ENCODE measurements at regions of chr2 and their contacts with region 1.

Region 1: GRCh38 chr2:20642055-20642971 is 8.6 kb downstream of the HS1BP3 start:
- DNase-seq: peak; percentile 77
- H3K27ac ChIP-seq: peak overlapping the region; percentile 77
- CTCF ChIP-seq: peak; percentile 93

Region 2: DNA sequence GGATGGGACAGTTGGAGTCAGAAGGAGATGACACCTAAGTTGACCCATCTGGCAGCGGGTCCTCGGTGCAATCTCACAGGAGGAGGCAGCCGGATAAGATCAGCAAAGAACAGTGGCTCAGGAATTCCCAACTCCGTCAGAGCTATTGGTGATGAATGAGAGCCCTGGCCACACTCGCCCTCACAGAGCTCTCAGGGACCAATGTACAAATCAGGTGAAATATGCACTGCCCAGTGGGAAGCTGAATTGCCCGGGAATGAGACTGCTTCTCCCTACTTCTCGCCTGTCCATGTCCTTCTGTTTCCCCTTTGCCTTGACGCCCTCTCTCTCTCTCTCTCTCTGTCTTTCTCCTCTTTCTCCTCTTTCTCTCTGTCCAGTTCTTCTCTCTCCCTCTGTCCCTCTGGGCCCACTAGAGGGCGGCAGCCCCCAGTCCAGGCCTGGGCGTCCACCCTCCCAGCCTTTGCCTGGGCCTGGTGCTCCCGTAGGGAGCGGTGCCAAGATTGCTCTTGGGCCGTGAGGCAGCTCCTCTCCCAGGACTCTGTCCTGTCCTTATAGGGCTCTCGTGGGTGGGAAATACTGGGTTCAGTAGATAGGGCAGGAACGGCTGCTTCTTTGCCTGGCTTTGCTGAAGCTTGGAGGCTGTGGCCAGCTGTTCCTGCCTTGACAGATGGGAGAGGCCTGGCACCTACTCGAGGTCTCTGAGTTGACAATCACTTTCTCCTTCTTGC is 263.4 kb before region 1 on chr2:
- CTCF ChIA-PET with region 1: interaction called, 13 read pairs
- POLR2A ChIA-PET with region 1: no interaction called
- DNase-seq: peak; percentile 60
- H3K27ac ChIP-seq: peak overlapping the region; percentile 58
- CTCF ChIP-seq: peak; percentile 80

Region 3: DNA sequence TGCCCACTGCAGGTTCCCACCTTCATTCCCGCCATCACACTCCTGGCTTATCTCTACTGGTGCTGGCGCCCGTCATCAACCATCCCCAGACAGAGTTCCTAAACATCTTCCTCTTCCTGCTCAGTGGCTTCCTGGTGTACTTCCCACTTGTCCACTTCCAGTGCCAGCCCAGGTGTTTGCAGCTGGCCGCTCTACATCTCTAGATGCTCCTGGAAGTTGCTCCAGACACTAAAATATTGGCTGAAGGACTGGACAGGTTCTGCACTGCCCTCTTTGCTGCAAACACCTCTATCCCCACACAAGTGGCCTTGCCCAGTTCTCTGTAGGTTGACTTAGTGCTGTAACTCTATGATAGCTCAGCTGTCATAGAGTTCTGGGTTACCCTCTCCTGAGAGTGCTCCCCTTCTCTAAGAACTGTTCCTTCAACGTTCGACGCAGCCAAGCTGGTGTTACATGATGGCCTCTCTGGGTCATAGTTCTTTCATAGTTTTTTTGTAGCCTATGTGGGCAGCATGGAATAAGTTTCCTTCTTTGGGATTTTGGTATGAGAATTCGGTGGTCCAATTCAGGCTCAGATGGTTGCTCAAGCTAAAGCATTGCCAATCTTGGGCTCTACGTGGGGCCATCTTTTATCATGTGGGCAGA is 245.8 kb before region 1 on chr2:
- CTCF ChIA-PET with region 1: interaction called, 17 read pairs
- POLR2A ChIA-PET with region 1: no interaction called
- DNase-seq: no peak
- H3K27ac ChIP-seq: no peak overlapping the region
- CTCF ChIP-seq: no peak

Region 4: GRCh38 chr2:20411361-20411894 is 230.9 kb before region 1 on chr2:
- CTCF ChIA-PET with region 1: interaction called, 14 read pairs
- POLR2A ChIA-PET with region 1: no interaction called
- DNase-seq: peak; percentile 68
- H3K27ac ChIP-seq: no peak overlapping the region
- CTCF ChIP-seq: peak; percentile 79

Region 5: DNA sequence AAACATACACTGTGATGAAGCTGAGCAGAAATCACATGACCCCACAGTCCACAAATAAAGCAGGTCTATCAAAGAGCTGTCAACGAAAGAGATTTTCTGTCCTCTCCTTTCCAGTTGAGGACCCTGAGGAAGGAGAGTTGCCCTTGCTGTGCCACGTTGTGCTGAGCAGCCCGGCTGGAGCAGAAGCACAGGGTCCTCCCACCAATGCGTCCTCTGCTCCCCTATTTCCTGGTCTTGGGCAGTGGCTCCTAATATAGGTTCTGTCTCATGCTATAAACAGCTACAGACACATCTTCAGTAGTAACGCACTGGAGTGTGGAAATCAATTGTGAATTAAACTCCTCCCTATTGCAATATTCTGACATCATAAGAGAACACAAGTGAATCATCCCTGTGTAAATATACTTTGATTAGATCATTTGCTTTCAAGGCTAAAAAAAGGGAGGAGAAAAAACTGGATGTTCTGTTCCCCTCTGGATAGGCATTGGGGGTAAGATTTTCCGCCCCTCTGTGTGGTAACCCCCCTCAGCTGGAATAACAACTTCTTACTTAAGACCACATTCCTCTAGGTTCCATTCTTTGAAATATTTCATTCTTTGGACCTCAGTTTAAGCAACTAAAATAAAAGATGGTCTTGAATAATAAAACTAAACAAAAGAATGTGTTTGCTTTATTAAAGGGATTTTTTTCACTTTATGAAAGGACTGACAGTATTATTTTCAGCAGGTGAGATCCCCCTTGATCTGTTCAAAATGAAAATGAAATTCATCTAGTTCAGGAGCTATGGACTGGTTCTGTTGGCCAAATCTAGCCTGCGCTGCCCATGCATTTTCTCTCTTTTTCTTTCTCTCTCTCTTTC is 203.8 kb before region 1 on chr2:
- CTCF ChIA-PET with region 1: interaction called, 22 read pairs
- POLR2A ChIA-PET with region 1: no interaction called
- DNase-seq: peak; percentile 83
- H3K27ac ChIP-seq: peak overlapping the region; percentile 76
- CTCF ChIP-seq: no peak

Region 6: GRCh38 chr2:20446917-20447436 is 195.3 kb before region 1 on chr2 and contains the start of gene RHOB:
- CTCF ChIA-PET with region 1: interaction called, 39 read pairs
- POLR2A ChIA-PET with region 1: interaction called, 13 read pairs
- DNase-seq: peak; percentile 100
- H3K27ac ChIP-seq: peak within 1 kb of the TSS; percentile 81
- CTCF ChIP-seq: no peak

Measured in RWPE1 (cell line).